B cell (primary cell): ENCODE measurements at regions of chr20 and their contacts with region 1.

Region 1: GRCh38 chr20:5569021-5569420 is 181.2 kb upstream of the SHLD1 start:
- DNase-seq: peak; percentile 74
- ATAC-seq: peak; percentile 84
- H3K4me3 ChIP-seq: no peak overlapping the region
- H3K4me3 Mint-ChIP-seq: no peak overlapping the region
- H3K27ac ChIP-seq: peak overlapping the region in 1 of 2 donors; percentile 24
- H3K27ac Mint-ChIP-seq: no peak overlapping the region
- H3K4me1 ChIP-seq: peaks cover 10 to 12% of the 10 kb centered on the region in 2 donors
- H3K4me1 Mint-ChIP-seq: peaks cover 23% of the 10 kb centered on the region
- H3K27me3 ChIP-seq: no peaks in the 10 kb centered on the region
- H3K27me3 Mint-ChIP-seq: no peaks in the 10 kb centered on the region
- CTCF ChIP-seq: peak; percentile 71

Region 2: GRCh38 chr20:5557123-5557522 is 11.9 kb before region 1 on chr20:
- CTCF ChIA-PET with region 1: interaction called, 23 read pairs
- POLR2A ChIA-PET with region 1: no interaction called
- intact Hi-C with region 1: no loop called
- DNase-seq: peak; percentile 63
- ATAC-seq: peak; percentile 49
- H3K4me3 ChIP-seq: no peak overlapping the region
- H3K4me3 Mint-ChIP-seq: no peak overlapping the region
- H3K27ac ChIP-seq: no peak overlapping the region
- H3K27ac Mint-ChIP-seq: no peak overlapping the region
- H3K4me1 ChIP-seq: no peaks in the 10 kb centered on the region
- H3K4me1 Mint-ChIP-seq: peaks cover 1% of the 10 kb centered on the region
- H3K27me3 ChIP-seq: no peaks in the 10 kb centered on the region
- H3K27me3 Mint-ChIP-seq: no peaks in the 10 kb centered on the region
- CTCF ChIP-seq: peak; percentile 69

Region 3: GRCh38 chr20:5580936-5581708 is 12.1 kb after region 1 on chr20:
- CTCF ChIA-PET with region 1: interaction called, 11 read pairs
- POLR2A ChIA-PET with region 1: interaction called, 7 read pairs
- intact Hi-C with region 1: loop called (anchors 2 kb)
- DNase-seq: no peak
- ATAC-seq: no peak
- H3K4me3 ChIP-seq: no peak overlapping the region
- H3K4me3 Mint-ChIP-seq: no peak overlapping the region
- H3K27ac ChIP-seq: no peak overlapping the region
- H3K27ac Mint-ChIP-seq: peak overlapping the region; percentile 37
- H3K4me1 ChIP-seq: peaks cover 0 to 2% of the 10 kb centered on the region in 2 donors
- H3K4me1 Mint-ChIP-seq: peaks cover 4% of the 10 kb centered on the region
- H3K27me3 ChIP-seq: no peaks in the 10 kb centered on the region
- H3K27me3 Mint-ChIP-seq: no peaks in the 10 kb centered on the region
- CTCF ChIP-seq: no peak

Region 4: DNA sequence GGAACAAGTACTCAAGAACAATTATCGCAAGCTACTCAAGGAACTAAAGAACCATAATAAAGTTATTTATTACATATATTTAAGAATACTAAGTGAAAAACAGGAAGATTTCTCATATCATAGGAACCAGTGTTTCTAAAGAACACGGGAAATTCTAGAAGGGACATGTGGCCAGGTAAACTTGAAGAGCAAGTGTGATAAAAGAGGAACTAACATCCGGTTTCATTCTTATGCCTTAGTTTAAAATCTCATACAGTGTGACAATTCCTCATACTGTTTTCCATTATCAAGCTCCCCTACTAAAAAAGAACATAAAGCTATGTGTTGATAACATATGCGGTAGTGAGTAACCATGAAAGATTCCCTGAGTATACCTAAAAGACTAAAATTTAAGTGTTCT is 17.7 kb after region 1 on chr20:
- CTCF ChIA-PET with region 1: interaction called, 7 read pairs
- POLR2A ChIA-PET with region 1: no interaction called
- intact Hi-C with region 1: loop called (anchors 2 kb)
- DNase-seq: peak; percentile 64
- ATAC-seq: peak; percentile 71
- H3K4me3 ChIP-seq: no peak overlapping the region
- H3K4me3 Mint-ChIP-seq: peak overlapping the region; percentile 48
- H3K27ac ChIP-seq: peak overlapping the region in 1 of 2 donors; percentile 59
- H3K27ac Mint-ChIP-seq: peak overlapping the region; percentile 82
- H3K4me1 ChIP-seq: peaks cover 14 to 29% of the 10 kb centered on the region in 2 donors
- H3K4me1 Mint-ChIP-seq: peaks cover 33% of the 10 kb centered on the region
- H3K27me3 ChIP-seq: no peaks in the 10 kb centered on the region
- H3K27me3 Mint-ChIP-seq: no peaks in the 10 kb centered on the region
- CTCF ChIP-seq: no peak

Region 5: GRCh38 chr20:5779071-5779900 is 210.3 kb after region 1 on chr20:
- CTCF ChIA-PET with region 1: interaction called, 39 read pairs
- POLR2A ChIA-PET with region 1: interaction called, 14 read pairs
- intact Hi-C with region 1: no loop called
- DNase-seq: no peak
- ATAC-seq: no peak
- H3K4me3 ChIP-seq: no peak overlapping the region
- H3K4me3 Mint-ChIP-seq: no peak overlapping the region
- H3K27ac ChIP-seq: no peak overlapping the region
- H3K27ac Mint-ChIP-seq: no peak overlapping the region
- H3K4me1 ChIP-seq: peaks cover 12 to 14% of the 10 kb centered on the region in 2 donors
- H3K4me1 Mint-ChIP-seq: peaks cover 8% of the 10 kb centered on the region
- H3K27me3 ChIP-seq: no peaks in the 10 kb centered on the region
- H3K27me3 Mint-ChIP-seq: no peaks in the 10 kb centered on the region
- CTCF ChIP-seq: no peak

Region 6: GRCh38 chr20:5797843-5798462 is 228.9 kb after region 1 on chr20:
- CTCF ChIA-PET with region 1: interaction called, 12 read pairs
- POLR2A ChIA-PET with region 1: no interaction called
- intact Hi-C with region 1: no loop called
- DNase-seq: peak; percentile 89
- ATAC-seq: peak; percentile 87
- H3K4me3 ChIP-seq: peak overlapping the region in 1 of 5 experiments; percentile 3
- H3K4me3 Mint-ChIP-seq: peak overlapping the region; percentile 73
- H3K27ac ChIP-seq: peak overlapping the region; percentile 84 to 89
- H3K27ac Mint-ChIP-seq: peak overlapping the region; percentile 100
- H3K4me1 ChIP-seq: peaks cover 17 to 32% of the 10 kb centered on the region in 2 donors
- H3K4me1 Mint-ChIP-seq: peaks cover 27% of the 10 kb centered on the region
- H3K27me3 ChIP-seq: no peaks in the 10 kb centered on the region
- H3K27me3 Mint-ChIP-seq: no peaks in the 10 kb centered on the region
- CTCF ChIP-seq: no peak

Region 7: DNA sequence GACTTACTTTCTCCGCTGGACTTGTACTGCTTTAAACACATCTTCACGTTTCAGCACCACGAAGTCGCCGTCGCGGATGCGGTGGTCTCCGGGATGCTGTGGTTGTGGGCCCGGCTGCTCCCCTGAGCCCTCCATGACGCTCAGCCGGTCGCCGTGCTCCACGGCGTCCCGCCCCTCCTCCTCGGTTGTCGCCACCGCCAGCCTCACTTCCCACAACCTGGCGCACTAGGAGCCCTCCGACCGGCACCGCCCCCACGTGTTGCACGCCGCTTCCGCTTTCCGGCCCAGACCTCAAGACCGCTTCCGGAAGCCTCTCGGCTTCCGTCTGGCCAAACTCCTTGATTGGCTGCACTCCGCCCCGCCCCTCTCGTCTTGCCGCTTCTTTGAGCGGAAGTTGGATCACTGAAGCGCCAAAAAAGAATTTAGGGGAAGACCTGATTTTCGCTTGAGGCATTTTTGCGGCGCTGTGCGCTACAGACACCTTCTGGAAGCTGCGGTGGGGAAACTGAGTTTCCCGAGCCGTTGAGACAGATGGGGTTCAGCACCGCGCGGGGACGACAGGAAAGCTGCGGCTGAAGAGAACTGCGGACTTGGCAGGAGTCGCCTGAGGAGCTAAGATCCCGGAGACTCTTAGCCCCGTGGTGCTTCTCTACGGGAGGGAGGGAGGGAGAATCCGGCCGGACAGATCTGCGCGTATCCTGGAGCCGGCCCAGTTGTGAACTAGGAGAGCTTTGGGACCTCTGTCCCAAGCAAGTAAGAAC is 381.4 kb after region 1 on chr20 and contains the starts of genes MCM8 and TRMT6:
- CTCF ChIA-PET with region 1: no interaction called
- POLR2A ChIA-PET with region 1: no interaction called
- intact Hi-C with region 1: loop called (anchors 1 kb)
- DNase-seq: peak; percentile 98
- ATAC-seq: peak; percentile 98
- H3K4me3 ChIP-seq: peak within 1 kb of the TSS; percentile 77 to 88 (median 85)
- H3K4me3 Mint-ChIP-seq: peak within 1 kb of the TSS; percentile 94
- H3K27ac ChIP-seq: peak within 1 kb of the TSS; percentile 74 to 90
- H3K27ac Mint-ChIP-seq: peak within 1 kb of the TSS; percentile 95
- H3K4me1 ChIP-seq: peaks cover 14 to 18% of the 10 kb centered on the region in 2 donors
- H3K4me1 Mint-ChIP-seq: peaks cover 21% of the 10 kb centered on the region
- H3K27me3 ChIP-seq: no peaks in the 10 kb centered on the region
- H3K27me3 Mint-ChIP-seq: no peaks in the 10 kb centered on the region
- CTCF ChIP-seq: no peak
- total RNA-seq, gene MCM8: 13.7 and 13.8 TPM in 2 replicates
- total RNA-seq, gene TRMT6: 14.2 and 18.2 TPM in 2 replicates